Endothelial cell of umbilical vein (primary cell): ENCODE measurements at regions of chr15 and their contacts with region 1.

Region 1: GRCh38 chr15:83631534-83631933 is 22.4 kb upstream of the ADAMTSL3 start:
- DNase-seq: no peak
- H3K4me3 ChIP-seq: no peak overlapping the region
- H3K27ac ChIP-seq: no peak overlapping the region
- H3K4me1 ChIP-seq: no peaks in the 10 kb centered on the region
- H3K27me3 ChIP-seq: no peaks in the 10 kb centered on the region
- CTCF ChIP-seq: no peak
- POLR2A ChIP-seq: no peak

Region 2: GRCh38 chr15:81723701-81724100 is 1907.8 kb before region 1 on chr15:
- CTCF ChIA-PET with region 1: no interaction called
- POLR2A ChIA-PET with region 1: no interaction called
- dilution Hi-C with region 1: no loop called
- intact Hi-C with region 1: loop called (anchors 10 kb)
- DNase-seq: no peak
- H3K4me3 ChIP-seq: no peak overlapping the region
- H3K27ac ChIP-seq: no peak overlapping the region
- H3K4me1 ChIP-seq: no peaks in the 10 kb centered on the region
- H3K27me3 ChIP-seq: no peaks in the 10 kb centered on the region
- CTCF ChIP-seq: no peak
- POLR2A ChIP-seq: no peak